ENCODE measurements at regions of chr9 and their contacts with region 1.

Region 1: DNA sequence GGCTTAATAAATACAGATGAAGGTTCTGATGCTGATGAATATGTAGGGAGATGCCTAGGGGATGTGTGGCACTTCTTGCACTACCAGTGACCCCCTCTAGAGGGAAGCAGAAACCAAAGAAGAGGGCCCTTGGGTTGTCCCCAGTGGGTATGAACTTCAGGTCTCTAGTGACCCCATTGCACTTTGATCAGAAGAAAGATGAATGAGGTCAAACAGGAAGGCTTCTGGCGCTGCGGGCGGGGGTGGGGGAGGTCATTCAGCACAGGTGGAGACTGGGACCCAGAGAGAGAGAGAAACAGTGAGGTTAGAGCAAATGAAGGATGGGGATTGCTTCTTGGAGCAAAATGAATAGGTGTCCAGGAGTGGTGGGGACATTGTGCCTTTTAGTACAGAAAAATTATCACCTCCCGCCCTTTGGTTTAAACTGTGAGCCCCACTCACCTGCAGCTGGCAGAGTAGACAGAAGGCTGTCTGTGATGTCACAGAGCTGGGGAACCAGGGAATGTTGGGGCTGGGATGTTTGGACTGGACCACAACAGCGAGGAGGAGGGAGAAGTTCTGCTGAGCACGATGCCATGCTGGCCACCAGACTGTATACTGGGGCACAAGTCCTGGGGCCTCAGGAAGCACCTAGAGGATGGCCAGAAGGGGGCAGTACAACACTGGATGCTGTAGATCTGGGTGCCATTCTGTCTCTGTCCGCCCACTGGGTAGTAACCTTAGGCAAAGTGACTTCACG is at the start of gene TEX48:
- DNase-seq: peak; percentile 90
- H3K4me3 Mint-ChIP-seq: peak within 1 kb of the TSS; percentile 40
- H3K27ac Mint-ChIP-seq: peak within 1 kb of the TSS; percentile 76
- H3K4me1 Mint-ChIP-seq: peaks cover 50% of the 10 kb centered on the region
- H3K27me3 Mint-ChIP-seq: peaks cover 6% of the 10 kb centered on the region
- total RNA-seq, gene TEX48: 0.57 to 1.2 TPM

Region 2: GRCh38 chr9:113973851-113974413 is 707.8 kb before region 1 on chr9:
- CTCF ChIA-PET with region 1: no interaction called
- POLR2A ChIA-PET with region 1: no interaction called
- intact Hi-C with region 1: no loop called
- DNase-seq: no peak
- H3K4me3 Mint-ChIP-seq: no peak overlapping the region
- H3K27ac Mint-ChIP-seq: no peak overlapping the region
- H3K4me1 Mint-ChIP-seq: no peaks in the 10 kb centered on the region
- H3K27me3 Mint-ChIP-seq: no peaks in the 10 kb centered on the region

Region 3: GRCh38 chr9:114696814-114697544 is 15.2 kb after region 1 on chr9:
- CTCF ChIA-PET with region 1: interaction called, 55 read pairs
- POLR2A ChIA-PET with region 1: interaction called, 8 read pairs
- intact Hi-C with region 1: loop called (anchors 1 kb)
- DNase-seq: peak; percentile 88
- H3K4me3 Mint-ChIP-seq: peak overlapping the region; percentile 42
- H3K27ac Mint-ChIP-seq: peak overlapping the region; percentile 99
- H3K4me1 Mint-ChIP-seq: peaks cover 87% of the 10 kb centered on the region
- H3K27me3 Mint-ChIP-seq: peaks cover 2% of the 10 kb centered on the region

Region 4: GRCh38 chr9:114738581-114739316 is 57.0 kb after region 1 on chr9:
- CTCF ChIA-PET with region 1: interaction called, 134 read pairs
- POLR2A ChIA-PET with region 1: interaction called, 3 read pairs
- intact Hi-C with region 1: loop called (anchors 1 kb)
- DNase-seq: peak; percentile 81
- H3K4me3 Mint-ChIP-seq: no peak overlapping the region
- H3K27ac Mint-ChIP-seq: peak overlapping the region; percentile 81
- H3K4me1 Mint-ChIP-seq: peaks cover 52% of the 10 kb centered on the region
- H3K27me3 Mint-ChIP-seq: no peaks in the 10 kb centered on the region

Region 5: GRCh38 chr9:114906908-114907571 is 225.3 kb after region 1 on chr9:
- CTCF ChIA-PET with region 1: interaction called, 242 read pairs
- POLR2A ChIA-PET with region 1: no interaction called
- intact Hi-C with region 1: loop called (anchors 1 kb)
- DNase-seq: peak; percentile 46
- H3K4me3 Mint-ChIP-seq: no peak overlapping the region
- H3K27ac Mint-ChIP-seq: peak overlapping the region; percentile 96
- H3K4me1 Mint-ChIP-seq: peaks cover 92% of the 10 kb centered on the region
- H3K27me3 Mint-ChIP-seq: no peaks in the 10 kb centered on the region

Region 6: GRCh38 chr9:115008536-115009270 is 326.9 kb after region 1 on chr9:
- CTCF ChIA-PET with region 1: interaction called, 103 read pairs
- POLR2A ChIA-PET with region 1: no interaction called
- intact Hi-C with region 1: no loop called
- DNase-seq: peak; percentile 68
- H3K4me3 Mint-ChIP-seq: no peak overlapping the region
- H3K27ac Mint-ChIP-seq: peak overlapping the region; percentile 15
- H3K4me1 Mint-ChIP-seq: peaks cover 86% of the 10 kb centered on the region
- H3K27me3 Mint-ChIP-seq: peaks cover 2% of the 10 kb centered on the region